ENCODE measurements at regions of chr10 and their contacts with region 1.

Region 1: DNA sequence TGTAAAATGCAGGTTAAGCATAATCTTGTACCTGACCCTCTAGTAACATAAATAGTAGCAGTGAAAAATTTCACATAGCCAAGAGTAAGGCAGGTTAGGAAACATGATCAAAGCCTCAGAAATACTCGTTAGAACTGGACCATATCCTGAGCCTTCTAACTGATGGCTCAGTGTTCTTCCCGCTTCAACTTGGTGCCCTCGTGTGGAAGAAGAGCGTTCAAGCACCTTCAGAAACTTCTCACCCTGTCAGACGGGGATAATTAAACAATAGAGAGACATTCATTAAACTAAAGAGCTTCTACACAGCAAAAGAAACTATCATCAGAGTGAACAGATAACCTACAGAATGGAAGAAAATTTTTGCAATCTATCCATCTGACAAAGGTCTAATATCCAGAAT is 124.5 kb downstream of the MYOF start:
- DNase-seq: peak; percentile 30
- H3K4me3 Mint-ChIP-seq: no peak overlapping the region
- H3K27ac Mint-ChIP-seq: no peak overlapping the region
- H3K4me1 Mint-ChIP-seq: peaks cover 5% of the 10 kb centered on the region
- H3K27me3 Mint-ChIP-seq: no peaks in the 10 kb centered on the region

Region 2: GRCh38 chr10:93180482-93180931 is 177.2 kb before region 1 on chr10:
- CTCF ChIA-PET with region 1: no interaction called
- POLR2A ChIA-PET with region 1: no interaction called
- DNase-seq: no peak
- H3K4me3 Mint-ChIP-seq: no peak overlapping the region
- H3K27ac Mint-ChIP-seq: no peak overlapping the region
- H3K4me1 Mint-ChIP-seq: no peaks in the 10 kb centered on the region
- H3K27me3 Mint-ChIP-seq: peaks cover 10% of the 10 kb centered on the region

Region 3: GRCh38 chr10:93280699-93281366 is 76.8 kb before region 1 on chr10:
- CTCF ChIA-PET with region 1: no interaction called
- POLR2A ChIA-PET with region 1: no interaction called
- DNase-seq: no peak
- H3K4me3 Mint-ChIP-seq: no peak overlapping the region
- H3K27ac Mint-ChIP-seq: no peak overlapping the region
- H3K4me1 Mint-ChIP-seq: no peaks in the 10 kb centered on the region
- H3K27me3 Mint-ChIP-seq: no peaks in the 10 kb centered on the region

Region 4: GRCh38 chr10:93370961-93371360 is 13.3 kb after region 1 on chr10:
- CTCF ChIA-PET with region 1: interaction called, 27 read pairs
- POLR2A ChIA-PET with region 1: no interaction called
- DNase-seq: no peak
- H3K4me3 Mint-ChIP-seq: no peak overlapping the region
- H3K27ac Mint-ChIP-seq: no peak overlapping the region
- H3K4me1 Mint-ChIP-seq: no peaks in the 10 kb centered on the region
- H3K27me3 Mint-ChIP-seq: no peaks in the 10 kb centered on the region

Region 5: GRCh38 chr10:93515071-93516005 is 157.7 kb after region 1 on chr10:
- CTCF ChIA-PET with region 1: interaction called, 27 read pairs
- POLR2A ChIA-PET with region 1: no interaction called
- DNase-seq: no peak
- H3K4me3 Mint-ChIP-seq: no peak overlapping the region
- H3K27ac Mint-ChIP-seq: no peak overlapping the region
- H3K4me1 Mint-ChIP-seq: peaks cover 7% of the 10 kb centered on the region
- H3K27me3 Mint-ChIP-seq: no peaks in the 10 kb centered on the region

Measured in activated CD4-positive, alpha-beta memory T cell treated with anti-CD3 and anti-CD28 coated beads, Interleukin-2, amount 10 ng/mL, durations not matched to agents 7 days and 5 days (primary cell).